ENCODE measurements at regions of chr18 and their contacts with region 1.

Region 1: GRCh38 chr18:23412351-23412964 is 40.6 kb upstream of the RIOK3 start:
- DNase-seq: no peak
- ATAC-seq: no peak
- H3K4me3 ChIP-seq: no peak overlapping the region
- H3K27ac ChIP-seq: no peak overlapping the region
- H3K4me1 ChIP-seq: no peaks in the 10 kb centered on the region
- H3K27me3 ChIP-seq: no peaks in the 10 kb centered on the region
- CTCF ChIP-seq: no peak
- POLR2A ChIP-seq: no peak
- RAD21 ChIP-seq: no peak

Region 2: DNA sequence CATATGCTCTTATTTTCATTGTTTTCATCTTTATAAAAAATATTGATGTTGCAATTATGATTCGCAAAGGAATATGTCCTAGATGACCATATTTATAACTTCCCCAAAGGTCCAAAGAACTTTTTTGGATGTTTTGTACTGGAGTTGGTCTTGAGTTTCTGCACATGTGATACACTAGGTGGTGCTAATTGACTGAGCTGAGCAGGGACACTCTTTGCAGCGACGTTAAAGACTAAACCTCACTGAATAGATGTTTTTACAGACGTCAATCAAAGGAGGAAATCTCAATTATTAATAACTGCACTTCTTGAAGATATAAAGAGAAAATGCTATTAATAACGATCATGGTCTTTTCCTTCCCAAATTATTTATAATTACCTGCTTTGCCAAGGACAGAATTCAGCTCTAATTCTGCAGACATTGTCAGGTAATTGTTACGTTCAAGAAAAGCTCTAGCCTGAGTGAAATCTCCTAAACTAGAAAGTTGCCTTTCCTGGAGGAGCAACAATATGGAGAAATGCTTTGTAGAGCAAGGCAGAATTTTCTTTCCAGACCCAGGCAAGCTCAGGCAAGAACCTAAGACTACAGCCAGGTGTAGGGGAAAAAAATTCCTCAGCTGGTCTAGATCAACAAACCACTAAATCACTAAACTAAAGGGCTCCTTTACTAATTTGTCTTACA is 598.7 kb before region 1 on chr18:
- CTCF ChIA-PET with region 1: interaction called, 8 read pairs
- POLR2A ChIA-PET with region 1: no interaction called
- RAD21 ChIA-PET with region 1: interaction called in 1 of 2 experiments, 3 read pairs
- intact Hi-C with region 1: loop called (anchors 2 kb)
- DNase-seq: no peak
- ATAC-seq: peak; percentile 74
- H3K4me3 ChIP-seq: no peak overlapping the region
- H3K27ac ChIP-seq: peak overlapping the region; percentile 67
- H3K4me1 ChIP-seq: peaks cover 41 to 43% of the 10 kb centered on the region in 2 experiments
- H3K27me3 ChIP-seq: no peaks in the 10 kb centered on the region
- CTCF ChIP-seq: peak; percentile 65 to 84 (median 83)
- POLR2A ChIP-seq: no peak
- RAD21 ChIP-seq: peak; percentile 97

Region 3: DNA sequence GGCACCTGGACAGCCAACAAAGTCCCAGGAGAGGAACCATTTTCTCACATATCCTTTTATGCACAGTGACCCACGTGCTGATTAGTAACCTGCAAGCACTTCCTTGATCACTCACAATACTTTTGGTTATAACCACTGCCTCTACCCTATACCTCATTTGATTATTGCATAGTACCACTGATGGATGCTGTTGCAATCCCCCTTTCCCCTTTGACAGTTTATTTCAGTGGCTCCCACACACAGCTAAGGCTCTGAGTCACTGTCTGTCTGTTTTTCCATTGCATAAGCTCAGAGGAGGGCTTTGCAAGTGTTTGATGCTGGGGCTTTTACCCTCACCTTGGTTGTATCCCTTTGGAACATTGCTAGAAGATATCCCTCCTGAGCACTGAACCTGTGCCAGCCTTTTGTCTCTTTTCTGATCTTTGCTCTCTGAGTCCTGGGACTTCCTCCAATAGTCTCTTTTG is 581.0 kb before region 1 on chr18:
- CTCF ChIA-PET with region 1: no interaction called
- POLR2A ChIA-PET with region 1: no interaction called
- RAD21 ChIA-PET with region 1: no interaction called
- intact Hi-C with region 1: no loop called
- DNase-seq: peak; percentile 32
- ATAC-seq: peak; percentile 69
- H3K4me3 ChIP-seq: no peak overlapping the region
- H3K27ac ChIP-seq: peak overlapping the region; percentile 9; the same call in 1 of the 2 replicates
- H3K4me1 ChIP-seq: peaks cover 24 to 41% of the 10 kb centered on the region in 2 experiments
- H3K27me3 ChIP-seq: no peaks in the 10 kb centered on the region
- CTCF ChIP-seq: no peak
- POLR2A ChIP-seq: no peak
- RAD21 ChIP-seq: no peak

Region 4: DNA sequence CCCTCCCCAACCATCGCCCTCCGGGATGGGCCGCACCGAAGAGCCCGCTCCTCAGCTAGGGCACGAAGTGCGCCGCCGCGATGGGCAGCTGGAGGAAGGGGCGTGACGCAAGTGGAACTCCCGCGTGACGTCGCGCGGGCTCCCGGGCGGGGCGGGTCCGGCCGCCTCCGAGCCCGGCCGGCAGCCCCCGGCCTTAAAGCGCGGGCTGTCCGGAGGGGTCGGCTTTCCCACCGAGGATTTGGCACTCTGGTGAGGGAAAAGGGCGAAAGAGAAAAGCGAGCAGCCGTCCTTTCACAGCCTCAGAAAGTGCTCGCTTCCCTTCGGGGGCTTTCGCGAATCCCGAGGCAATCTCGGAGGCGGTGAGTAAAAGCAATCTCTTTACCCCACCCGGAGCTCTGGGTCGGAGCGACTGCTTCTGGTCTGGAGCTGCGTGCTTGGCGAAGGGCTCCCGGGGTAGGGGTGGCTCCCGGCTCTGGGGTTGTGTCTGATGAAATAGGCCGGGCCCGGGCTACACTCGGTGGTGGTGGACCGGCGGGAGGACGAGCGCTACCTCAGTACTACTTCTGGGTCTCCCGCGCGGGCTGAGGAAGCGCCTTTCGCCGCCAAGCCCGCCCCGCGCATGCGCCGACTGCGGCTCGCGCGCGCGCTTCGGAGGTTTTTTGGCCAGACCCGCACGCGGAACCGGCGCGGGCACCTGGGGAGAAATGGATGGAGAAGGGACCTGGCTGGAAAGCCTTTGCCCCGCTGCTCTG is 479.1 kb before region 1 on chr18 and contains the start of gene RBBP8:
- CTCF ChIA-PET with region 1: no interaction called
- POLR2A ChIA-PET with region 1: no interaction called
- RAD21 ChIA-PET with region 1: no interaction called
- intact Hi-C with region 1: loop called (anchors 5 kb)
- DNase-seq: peak; percentile 58
- ATAC-seq: peak; percentile 87
- H3K4me3 ChIP-seq: peak within 1 kb of the TSS; percentile 60 to 71
- H3K27ac ChIP-seq: peak within 1 kb of the TSS; percentile 88
- H3K4me1 ChIP-seq: peaks cover 0 to 22% of the 10 kb centered on the region in 2 experiments; a peak in 3 of 4 replicates
- H3K27me3 ChIP-seq: no peaks in the 10 kb centered on the region
- CTCF ChIP-seq: no peak
- POLR2A ChIP-seq: peak; percentile 77
- RAD21 ChIP-seq: no peak
- total RNA-seq, gene RBBP8: 66.6 TPM

Region 5: DNA sequence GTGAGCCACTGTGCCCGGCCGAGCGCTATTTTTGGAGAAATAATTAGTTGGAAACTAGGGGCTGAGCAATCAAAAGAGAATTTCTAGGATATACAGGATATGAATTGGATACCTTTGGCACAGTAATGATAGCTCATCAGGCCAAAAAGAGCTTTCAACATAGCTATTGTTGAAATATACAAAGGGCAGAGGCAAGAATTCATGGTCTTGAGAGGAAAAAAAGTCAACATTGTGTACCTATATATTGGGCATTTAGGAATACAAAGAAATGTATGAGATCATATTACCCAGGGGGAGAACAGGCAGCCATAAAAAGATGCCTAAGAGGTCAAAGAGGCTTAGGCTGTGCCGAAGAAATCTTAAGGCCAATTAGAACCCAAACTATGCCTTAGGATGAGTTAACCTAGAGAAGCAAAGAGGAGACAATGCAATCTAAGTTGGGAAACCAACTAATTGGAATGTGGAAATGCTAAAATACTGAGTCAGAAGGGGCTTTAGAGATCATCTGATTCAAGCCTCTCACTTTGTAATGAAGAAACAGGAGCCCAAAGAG is 380.4 kb before region 1 on chr18:
- CTCF ChIA-PET with region 1: interaction called, 29 read pairs
- POLR2A ChIA-PET with region 1: no interaction called
- RAD21 ChIA-PET with region 1: no interaction called
- intact Hi-C with region 1: loop called (anchors 1 kb)
- DNase-seq: no peak
- ATAC-seq: peak; percentile 31; the same call in 1 of the 2 replicates
- H3K4me3 ChIP-seq: no peak overlapping the region
- H3K27ac ChIP-seq: no peak overlapping the region
- H3K4me1 ChIP-seq: peaks cover 3 to 16% of the 10 kb centered on the region in 2 experiments; a peak in 3 of 4 replicates
- H3K27me3 ChIP-seq: no peaks in the 10 kb centered on the region
- CTCF ChIP-seq: no peak
- POLR2A ChIP-seq: no peak
- RAD21 ChIP-seq: no peak

Region 6: DNA sequence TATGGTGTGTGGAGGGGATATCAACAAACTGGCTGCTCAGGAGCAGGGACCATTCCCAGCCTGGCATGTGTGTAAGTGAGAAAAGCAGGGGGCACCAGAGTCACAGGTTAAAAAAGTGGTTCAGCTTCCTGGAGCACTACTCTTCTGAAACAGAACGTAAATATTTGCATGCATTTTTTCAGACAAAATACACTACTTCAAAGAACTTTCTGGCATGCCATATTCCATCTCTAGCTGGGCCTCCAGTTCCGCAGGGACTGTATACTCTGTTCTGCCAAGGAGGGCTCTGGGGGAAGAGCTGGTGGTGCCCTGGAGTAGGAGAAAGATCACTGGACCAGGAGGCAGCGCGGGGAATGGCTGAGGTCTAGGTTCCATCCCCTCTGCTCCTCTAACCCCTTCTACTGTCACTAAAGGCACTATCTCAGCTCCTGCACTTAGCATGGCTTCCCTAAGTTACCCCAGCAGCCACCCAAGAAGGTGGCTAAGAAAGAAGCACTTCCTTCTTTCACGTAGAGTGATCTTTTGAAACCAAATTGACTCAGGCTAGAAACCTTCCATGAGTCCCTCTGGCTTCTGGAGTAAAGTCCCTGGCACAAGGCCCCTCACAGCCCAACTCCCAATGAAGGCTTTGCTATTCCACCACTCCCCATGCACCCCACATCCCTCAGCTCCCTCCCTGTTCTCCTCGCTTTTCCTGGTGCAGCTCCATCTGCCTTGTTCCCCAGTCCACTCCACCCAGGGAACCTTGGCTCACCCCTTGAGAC is 334.8 kb before region 1 on chr18:
- CTCF ChIA-PET with region 1: interaction called, 3 read pairs
- POLR2A ChIA-PET with region 1: no interaction called
- RAD21 ChIA-PET with region 1: no interaction called
- intact Hi-C with region 1: loop called (anchors 1 kb)
- DNase-seq: no peak
- ATAC-seq: peak; percentile 63
- H3K4me3 ChIP-seq: no peak overlapping the region
- H3K27ac ChIP-seq: no peak overlapping the region
- H3K4me1 ChIP-seq: no peaks in the 10 kb centered on the region
- H3K27me3 ChIP-seq: no peaks in the 10 kb centered on the region
- CTCF ChIP-seq: peak; percentile 26 to 42 (median 38); a peak in 4 of 6 replicates
- POLR2A ChIP-seq: no peak
- RAD21 ChIP-seq: peak; percentile 71

Region 7: DNA sequence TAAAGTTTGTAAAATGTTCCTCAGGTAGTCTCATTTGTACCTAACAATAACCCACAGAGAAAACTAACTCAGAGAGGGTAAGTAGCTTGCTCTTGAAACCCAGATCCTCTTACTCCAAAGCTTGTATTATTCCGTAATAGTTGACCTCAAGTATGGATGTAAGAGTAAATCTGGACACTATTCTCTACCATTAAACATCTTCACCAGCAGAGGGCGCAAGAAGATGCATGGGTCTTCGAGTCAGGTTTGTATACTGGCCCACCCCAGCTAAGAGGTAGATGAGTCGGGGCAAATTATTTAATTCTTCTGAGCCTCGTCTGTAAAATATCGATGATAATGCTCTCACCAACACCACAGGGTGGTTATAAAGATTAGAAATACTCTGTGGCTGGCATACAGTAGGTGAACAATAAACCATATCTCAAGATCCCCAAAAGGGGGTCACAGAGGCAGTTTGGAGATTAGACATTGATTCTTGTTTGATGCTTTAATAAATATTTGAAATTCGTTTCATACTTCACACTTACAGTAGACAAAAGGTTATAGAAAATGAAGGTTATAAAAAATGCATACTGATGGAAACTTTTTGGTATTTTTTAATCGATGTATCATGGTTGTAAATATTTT is 280.7 kb before region 1 on chr18:
- CTCF ChIA-PET with region 1: interaction called, 27 read pairs
- POLR2A ChIA-PET with region 1: no interaction called
- RAD21 ChIA-PET with region 1: interaction called, 5 to 6 read pairs
- intact Hi-C with region 1: loop called (anchors 1 kb)
- DNase-seq: peak; percentile 73
- ATAC-seq: peak; percentile 43
- H3K4me3 ChIP-seq: no peak overlapping the region
- H3K27ac ChIP-seq: no peak overlapping the region
- H3K4me1 ChIP-seq: peaks cover 18 to 34% of the 10 kb centered on the region in 2 experiments
- H3K27me3 ChIP-seq: no peaks in the 10 kb centered on the region
- CTCF ChIP-seq: peak; percentile 71 to 83 (median 77)
- POLR2A ChIP-seq: no peak
- RAD21 ChIP-seq: peak; percentile 82